ENCODE measurements at regions of chr1 and their contacts with region 1.

Region 1: DNA sequence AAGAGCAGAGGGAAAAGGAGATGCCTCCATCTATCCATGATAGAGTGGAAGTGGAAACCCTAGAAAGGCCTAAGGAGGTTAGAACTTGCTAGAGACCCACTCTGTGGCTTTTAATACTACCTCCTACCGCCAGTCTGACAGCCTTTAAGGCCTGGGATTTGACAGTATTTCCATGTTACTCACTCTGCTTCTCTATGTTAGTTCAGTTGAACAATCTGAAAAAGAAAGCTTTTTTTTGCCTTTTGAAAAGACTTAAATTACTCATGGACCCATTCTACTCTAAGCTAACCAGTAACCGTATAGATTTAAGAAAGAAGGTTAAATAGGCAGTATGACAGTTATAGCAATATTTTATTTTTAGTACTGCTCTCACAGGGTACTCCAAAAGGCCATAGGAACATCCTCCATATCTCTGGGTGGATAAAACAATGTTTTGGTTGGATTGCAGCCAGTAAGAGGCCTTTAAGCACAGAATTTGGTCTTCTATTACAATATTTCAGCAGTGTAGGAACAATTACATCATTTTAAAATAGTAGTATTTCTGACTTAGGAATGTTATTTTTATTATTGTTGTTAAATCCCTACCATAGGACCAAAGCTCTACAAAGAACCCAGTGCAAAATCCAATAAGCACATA is 15.9 kb upstream of the GPR25 start:
- DNase-seq: no peak
- ATAC-seq: no peak; the same call in 2 of the 3 replicates
- H3K4me3 ChIP-seq: no peak overlapping the region
- H3K27ac ChIP-seq: no peak overlapping the region
- H3K4me1 ChIP-seq: peaks cover 3% of the 10 kb centered on the region
- H3K27me3 ChIP-seq: no peaks in the 10 kb centered on the region
- CTCF ChIP-seq: no peak
- EP300 ChIP-seq: no peak
- POLR2A ChIP-seq: no peak
- RAD21 ChIP-seq: no peak

Region 2: DNA sequence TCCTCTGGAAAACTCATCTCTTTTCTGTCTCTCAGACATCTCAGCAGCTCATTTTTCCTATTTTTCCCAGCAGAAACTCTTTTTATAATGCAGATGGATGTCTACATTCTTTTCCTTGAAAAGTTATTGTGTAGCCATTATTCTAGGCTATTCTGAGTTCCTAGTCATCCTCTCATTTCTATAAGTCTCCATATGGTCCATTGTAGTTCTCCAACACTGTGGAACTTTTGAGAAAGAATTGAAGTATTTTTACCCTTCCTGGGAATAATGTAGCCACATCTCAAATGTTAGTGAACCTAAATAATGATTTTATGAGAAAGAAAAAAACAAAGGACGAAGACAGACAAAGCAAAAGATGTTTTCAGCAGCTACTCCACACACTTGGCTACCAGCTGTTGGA is 10.4 kb before region 1 on chr1:
- CTCF ChIA-PET with region 1: interaction called, 10 read pairs
- POLR2A ChIA-PET with region 1: interaction called, 3 read pairs
- RAD21 ChIA-PET with region 1: no interaction called
- SMC1A ChIA-PET with region 1: interaction called, 12 read pairs
- in situ Hi-C with region 1: no loop called
- intact Hi-C with region 1: loop called (anchors 1 kb)
- DNase-seq: no peak
- ATAC-seq: no peak
- H3K4me3 ChIP-seq: no peak overlapping the region
- H3K27ac ChIP-seq: no peak overlapping the region
- H3K4me1 ChIP-seq: no peaks in the 10 kb centered on the region
- H3K27me3 ChIP-seq: no peaks in the 10 kb centered on the region
- CTCF ChIP-seq: no peak
- EP300 ChIP-seq: no peak
- POLR2A ChIP-seq: no peak
- RAD21 ChIP-seq: no peak

Region 3: DNA sequence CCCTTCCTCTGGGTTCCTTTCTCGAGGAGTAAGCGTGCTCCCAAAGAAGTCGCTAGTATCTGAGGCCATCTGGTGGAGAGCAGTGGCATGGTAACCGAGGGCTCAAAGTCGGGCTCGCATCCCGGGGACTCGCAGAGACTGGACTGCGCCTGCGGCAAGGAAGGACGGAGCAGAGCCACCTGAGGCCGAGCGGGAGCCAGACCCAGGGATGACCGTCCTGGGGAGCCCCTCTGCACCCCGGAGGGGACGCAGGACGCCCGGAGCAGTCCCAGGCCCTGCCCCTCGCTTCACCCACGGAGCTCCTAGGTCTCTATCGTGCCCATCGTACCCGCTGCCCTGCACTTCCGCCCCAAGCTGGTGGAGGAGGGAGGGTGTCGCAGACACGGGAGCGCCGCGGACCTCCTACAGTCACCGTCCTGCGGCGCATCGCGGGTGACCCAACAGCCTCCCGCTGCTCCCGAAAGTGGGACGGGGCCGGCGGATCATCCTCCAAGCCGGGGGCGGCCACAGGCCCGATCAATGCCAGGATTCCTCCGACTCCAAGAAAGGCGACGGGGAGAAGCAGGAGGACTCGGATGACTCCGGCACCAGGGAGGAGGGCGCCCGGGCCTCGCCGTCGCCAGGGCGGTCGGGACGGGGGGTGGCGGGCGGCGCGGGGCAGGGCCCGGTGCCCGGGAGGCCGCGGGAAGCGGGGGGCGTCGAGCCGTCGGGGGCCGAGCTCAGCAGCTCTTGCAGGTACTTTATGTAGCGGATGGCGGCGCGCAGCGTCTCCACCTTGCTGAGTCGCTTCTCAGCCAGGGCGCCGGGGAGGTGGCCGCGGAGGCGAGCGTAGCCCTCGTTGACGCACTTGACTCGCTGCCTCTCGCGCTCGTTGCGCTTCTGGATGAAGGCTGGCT is 257.6 kb after region 1 on chr1:
- CTCF ChIA-PET with region 1: no interaction called
- POLR2A ChIA-PET with region 1: no interaction called
- RAD21 ChIA-PET with region 1: no interaction called
- SMC1A ChIA-PET with region 1: no interaction called
- in situ Hi-C with region 1: no loop called
- intact Hi-C with region 1: no loop called
- DNase-seq: peak; percentile 17
- ATAC-seq: peak; percentile 97
- H3K4me3 ChIP-seq: peak overlapping the region; percentile 47
- H3K27ac ChIP-seq: no peak overlapping the region
- H3K4me1 ChIP-seq: no peaks in the 10 kb centered on the region
- H3K27me3 ChIP-seq: peaks cover 3 to 8% of the 10 kb centered on the region in 2 experiments; a peak in 3 of 4 replicates
- CTCF ChIP-seq: peak; percentile 79 to 89 (median 85)
- EP300 ChIP-seq: no peak
- POLR2A ChIP-seq: no peak
- RAD21 ChIP-seq: peak; percentile 84